WTC11 (cell line): ENCODE measurements at regions of chr9 and their contacts with region 1.

Region 1: GRCh38 chr9:2145746-2146145 is 130.6 kb downstream of the SMARCA2 start:
- DNase-seq: no peak
- ATAC-seq: no peak
- H3K4me3 Mint-ChIP-seq: no peak overlapping the region
- H3K27ac Mint-ChIP-seq: no peak overlapping the region
- H3K4me1 Mint-ChIP-seq: peaks cover 18% of the 10 kb centered on the region
- H3K27me3 Mint-ChIP-seq: no peaks in the 10 kb centered on the region
- CTCF ChIP-seq: no peak

Region 2: DNA sequence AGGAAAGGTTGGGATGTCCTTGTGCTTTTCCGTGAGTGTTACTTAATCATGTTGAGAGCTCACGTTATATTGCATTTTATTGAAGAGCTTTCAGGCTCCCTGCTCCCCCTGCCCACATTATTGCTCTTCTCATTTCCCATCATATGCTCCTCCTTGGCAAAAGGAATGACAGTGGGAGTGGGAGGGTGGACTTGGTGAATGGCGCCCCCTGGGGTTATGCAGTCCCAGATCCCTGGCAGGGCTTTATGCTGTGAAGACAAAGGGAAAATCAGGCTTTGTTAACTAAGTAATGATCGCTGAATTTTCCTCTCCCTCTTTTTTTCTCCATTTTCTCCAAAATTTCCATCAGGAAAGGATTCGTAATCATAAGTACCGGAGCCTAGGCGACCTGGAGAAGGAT is 36.0 kb after region 1 on chr9:
- CTCF ChIA-PET with region 1: interaction called, 10 read pairs
- POLR2A ChIA-PET with region 1: no interaction called
- DNase-seq: peak; percentile 74
- ATAC-seq: peak; percentile 90
- H3K4me3 Mint-ChIP-seq: peak overlapping the region; percentile 26
- H3K27ac Mint-ChIP-seq: peak overlapping the region; percentile 97
- H3K4me1 Mint-ChIP-seq: peaks cover 46% of the 10 kb centered on the region
- H3K27me3 Mint-ChIP-seq: no peaks in the 10 kb centered on the region
- CTCF ChIP-seq: peak; percentile 53; the same call in 1 of the 2 replicates